ENCODE measurements at regions of chr18 and their contacts with region 1.

Region 1: GRCh38 chr18:74450626-74451025 is 6.5 kb downstream of the DIPK1C start:
- DNase-seq: no peak

Region 2: GRCh38 chr18:74524097-74524496 is 73.5 kb after region 1 on chr18:
- intact Hi-C with region 1: loop called in 1 of 2 experiments (anchors 2 kb)
- DNase-seq: peak; percentile 40

Region 3: GRCh38 chr18:75089748-75090327 is 639.2 kb after region 1 on chr18:
- intact Hi-C with region 1: loop called in 1 of 2 experiments (anchors 5 kb)
- DNase-seq: no peak

Measured in posterior vena cava (tissue), 2 donors.